SK-N-SH (cell line): ENCODE measurements at regions of chr5 and their contacts with region 1.

Region 1: DNA sequence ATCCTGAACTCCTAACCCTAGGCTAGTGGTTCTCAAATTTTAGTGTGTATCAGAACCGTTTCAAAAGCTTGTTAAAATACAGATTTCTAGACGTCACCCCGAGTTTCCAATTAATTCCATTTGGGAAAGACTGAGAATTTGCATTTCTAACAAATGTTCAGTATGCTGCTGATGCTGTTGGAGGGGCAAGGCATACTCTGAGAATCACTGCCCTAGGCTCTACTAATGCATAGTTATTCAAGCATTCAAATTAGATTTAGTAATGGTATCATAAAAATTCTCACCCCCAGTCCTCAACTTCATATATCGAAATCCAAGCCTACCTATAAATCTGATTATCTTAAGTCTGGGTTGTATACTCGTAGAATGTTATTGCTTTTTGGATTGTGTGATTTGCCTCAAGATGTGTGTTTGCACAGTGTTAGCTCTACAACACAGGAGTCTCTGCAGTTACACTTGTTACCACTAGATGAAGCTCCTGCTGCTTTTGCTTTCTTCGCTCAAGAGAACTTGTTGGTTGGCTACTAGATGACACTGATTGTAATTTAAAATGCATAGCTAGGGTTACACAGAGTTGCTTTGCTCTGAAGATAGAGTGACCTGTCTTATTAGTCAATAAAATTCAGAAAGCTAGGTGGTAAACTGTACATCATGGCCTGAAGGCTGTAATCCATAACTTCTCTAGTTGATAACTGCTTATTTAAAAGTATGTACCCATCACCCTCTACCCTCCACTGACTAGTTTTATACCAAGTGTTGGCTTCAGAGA is 7.5 kb upstream of the ERAP2 start:
- DNase-seq: peak; percentile 32
- H3K4me3 ChIP-seq: no peak overlapping the region; a peak in 1 of 4 replicates
- H3K27ac ChIP-seq: no peak overlapping the region
- H3K4me1 ChIP-seq: no peaks in the 10 kb centered on the region
- H3K27me3 ChIP-seq: no peaks in the 10 kb centered on the region
- CTCF ChIP-seq: peak; percentile 91
- EP300 ChIP-seq: no peak
- RAD21 ChIP-seq: peak; percentile 88

Region 2: GRCh38 chr5:96838201-96839070 is 30.4 kb before region 1 on chr5:
- CTCF ChIA-PET with region 1: interaction called, 10 read pairs
- POLR2A ChIA-PET with region 1: no interaction called
- DNase-seq: no peak
- H3K4me3 ChIP-seq: no peak overlapping the region
- H3K27ac ChIP-seq: no peak overlapping the region
- H3K4me1 ChIP-seq: no peaks in the 10 kb centered on the region
- H3K27me3 ChIP-seq: no peaks in the 10 kb centered on the region
- CTCF ChIP-seq: no peak
- EP300 ChIP-seq: no peak
- RAD21 ChIP-seq: no peak

Region 3: GRCh38 chr5:97142521-97143254 is 273.9 kb after region 1 on chr5 and contains the start of gene LIX1:
- CTCF ChIA-PET with region 1: interaction called, 30 read pairs
- POLR2A ChIA-PET with region 1: no interaction called
- DNase-seq: peak; percentile 68
- H3K4me3 ChIP-seq: no peak within 1 kb of the TSS
- H3K27ac ChIP-seq: no peak within 1 kb of the TSS
- H3K4me1 ChIP-seq: peaks cover 0 to 3% of the 10 kb centered on the region in 2 experiments; a peak in 2 of 4 replicates
- H3K27me3 ChIP-seq: no peaks in the 10 kb centered on the region
- CTCF ChIP-seq: peak; percentile 67
- EP300 ChIP-seq: peak in 1 of 2 experiments; percentile 56; a peak in 1 of 4 replicates
- RAD21 ChIP-seq: peak; percentile 88
- polyA plus RNA-seq, gene LIX1: 0.02 TPM in 1 of 2 replicates, not detected in the other

Region 4: GRCh38 chr5:97167435-97167834 is 298.6 kb after region 1 on chr5:
- CTCF ChIA-PET with region 1: interaction called, 80 read pairs
- POLR2A ChIA-PET with region 1: no interaction called
- DNase-seq: no peak
- H3K4me3 ChIP-seq: no peak overlapping the region
- H3K27ac ChIP-seq: no peak overlapping the region
- H3K4me1 ChIP-seq: no peaks in the 10 kb centered on the region
- H3K27me3 ChIP-seq: no peaks in the 10 kb centered on the region
- CTCF ChIP-seq: no peak
- EP300 ChIP-seq: no peak
- RAD21 ChIP-seq: no peak